MCF 10A (cell line): ENCODE measurements at regions of chr12 and their contacts with region 1.

Region 1: GRCh38 chr12:108950991-108951739 is 69.7 kb downstream of the SVOP start:
- DNase-seq: peak; percentile 79
- H3K4me3 Mint-ChIP-seq: no peak overlapping the region
- H3K27ac Mint-ChIP-seq: no peak overlapping the region
- H3K4me1 Mint-ChIP-seq: peaks cover 14% of the 10 kb centered on the region
- H3K27me3 Mint-ChIP-seq: peaks cover 2% of the 10 kb centered on the region
- CTCF ChIP-seq: peak; percentile 81

Region 2: DNA sequence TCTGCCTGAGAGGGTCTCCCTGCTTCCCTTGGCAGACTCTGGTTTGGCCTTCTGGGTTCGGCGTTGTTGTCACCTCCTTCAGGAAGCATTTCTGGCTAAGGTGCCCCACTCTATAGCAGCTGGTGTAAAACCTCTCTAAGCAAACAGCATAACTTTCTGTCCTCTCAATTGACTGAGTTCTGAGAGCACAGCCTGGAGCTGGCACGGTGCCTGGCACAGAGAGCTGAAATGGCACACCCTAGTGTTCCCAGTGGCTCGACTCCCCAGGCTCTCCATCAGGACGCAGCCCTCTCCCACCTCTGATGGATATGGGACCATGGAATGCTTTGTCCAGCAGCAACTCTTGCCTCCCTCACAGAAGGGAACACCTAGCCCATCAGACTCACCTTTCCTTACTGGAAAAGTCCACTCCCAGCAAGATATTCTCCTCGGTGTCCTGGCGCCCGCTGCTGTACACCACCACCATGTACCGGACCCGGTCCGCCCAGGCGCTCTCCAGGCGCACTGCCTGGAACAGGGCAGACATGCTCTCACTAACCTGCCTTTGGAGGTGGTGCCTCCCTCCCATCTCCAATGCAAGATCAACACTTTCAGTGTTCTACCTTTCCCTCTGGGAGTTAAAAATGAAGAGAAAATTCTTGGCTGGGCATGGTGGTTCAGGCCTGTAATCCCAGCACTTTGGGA is 134.4 kb before region 1 on chr12:
- CTCF ChIA-PET with region 1: interaction called, 23 read pairs
- POLR2A ChIA-PET with region 1: interaction called, 9 read pairs
- intact Hi-C with region 1: no loop called
- DNase-seq: peak; percentile 33
- H3K4me3 Mint-ChIP-seq: no peak overlapping the region
- H3K27ac Mint-ChIP-seq: peak overlapping the region; percentile 12
- H3K4me1 Mint-ChIP-seq: peaks cover 31% of the 10 kb centered on the region
- H3K27me3 Mint-ChIP-seq: no peaks in the 10 kb centered on the region
- CTCF ChIP-seq: no peak

Region 3: DNA sequence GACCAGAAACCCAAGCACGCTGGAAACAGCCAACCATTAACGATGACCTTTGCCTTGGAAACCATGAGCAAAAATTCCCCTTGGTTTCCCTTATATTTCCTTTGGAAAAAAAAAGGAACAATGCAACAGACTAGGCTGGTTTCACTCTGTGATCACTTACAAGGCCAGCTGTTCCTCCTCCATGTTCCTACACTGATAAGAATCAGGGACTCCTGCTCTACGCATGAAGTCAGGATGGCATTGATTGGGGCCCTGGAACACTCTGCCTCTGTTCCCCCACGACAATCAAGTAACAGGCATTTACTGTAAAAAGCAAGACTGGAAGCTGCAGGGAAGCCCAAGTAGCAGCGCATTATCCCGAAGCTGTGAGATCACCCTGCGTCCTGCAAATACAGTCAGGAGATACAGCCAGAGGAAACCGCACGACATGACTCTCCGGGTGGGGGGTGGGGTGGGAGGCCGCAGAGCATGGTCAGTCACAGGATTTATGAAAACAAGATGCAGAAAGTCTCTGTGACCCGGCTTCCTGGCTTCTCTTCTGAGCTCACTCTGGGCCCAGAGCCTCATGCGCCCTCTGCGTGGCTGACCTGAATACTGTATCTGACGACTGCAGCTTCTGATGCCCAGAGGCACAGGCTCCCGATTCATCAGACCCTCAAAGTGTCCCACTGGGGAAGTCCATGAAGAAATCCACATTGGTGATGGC is 124.9 kb before region 1 on chr12:
- CTCF ChIA-PET with region 1: interaction called, 10 read pairs
- POLR2A ChIA-PET with region 1: interaction called, 5 read pairs
- intact Hi-C with region 1: no loop called
- DNase-seq: no peak
- H3K4me3 Mint-ChIP-seq: no peak overlapping the region
- H3K27ac Mint-ChIP-seq: no peak overlapping the region
- H3K4me1 Mint-ChIP-seq: peaks cover 21% of the 10 kb centered on the region
- H3K27me3 Mint-ChIP-seq: no peaks in the 10 kb centered on the region
- CTCF ChIP-seq: no peak